Left ventricle myocardium superior (tissue), 1 donor: ENCODE measurements at regions of chr11 and their contacts with region 1.

Region 1: DNA sequence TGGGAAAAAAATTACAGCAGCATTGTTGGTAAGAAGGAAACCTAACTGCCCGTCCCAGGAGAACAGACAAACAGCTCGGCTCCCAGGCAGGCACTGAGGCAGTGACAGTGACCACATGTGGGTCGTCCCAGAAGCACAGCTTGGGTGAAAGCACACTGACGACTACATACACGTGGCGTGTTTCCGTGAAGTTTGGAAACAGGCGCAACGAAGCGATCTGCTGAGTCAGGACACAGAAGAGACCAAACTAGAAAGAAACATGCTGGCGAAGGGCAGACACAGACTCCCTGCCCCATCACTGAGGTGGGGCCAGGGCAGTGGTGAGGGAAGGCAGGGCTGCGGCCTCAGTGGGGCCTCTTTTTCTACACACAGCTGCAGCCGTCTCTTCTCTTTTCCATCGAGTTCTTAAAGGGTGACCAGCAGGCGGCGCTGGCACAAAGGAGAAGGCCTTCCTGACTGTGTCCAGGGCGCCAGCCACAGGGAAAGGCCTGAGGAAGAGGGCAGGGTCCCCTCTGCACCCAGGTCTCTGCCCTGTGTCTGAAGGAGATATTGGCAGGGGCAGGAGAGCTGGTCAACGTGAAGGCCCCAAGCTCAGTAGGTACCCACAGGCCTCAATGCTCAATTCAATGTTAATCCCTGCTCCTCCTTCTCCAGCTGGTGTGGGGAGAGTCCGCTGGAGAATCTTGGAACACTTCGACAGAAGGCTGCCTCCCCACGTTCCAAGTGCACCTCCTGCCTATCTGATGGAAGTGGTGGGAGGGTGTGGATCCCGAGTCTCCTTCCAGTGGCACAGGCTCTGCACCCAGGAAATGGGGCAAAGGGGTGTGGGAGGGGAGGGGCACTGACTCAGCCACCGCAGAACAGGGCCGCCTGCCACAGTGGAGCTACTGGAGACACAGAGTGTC is 19.9 kb downstream of the CARS1 start:
- DNase-seq: peak; percentile 91
- ATAC-seq: peak; percentile 70

Region 2: GRCh38 chr11:3091791-3092602 is 54.7 kb after region 1 on chr11:
- intact Hi-C with region 1: loop called (anchors 2 kb)
- DNase-seq: peak; percentile 83
- ATAC-seq: peak; percentile 74

Region 3: GRCh38 chr11:3217676-3218482 is 180.6 kb after region 1 on chr11:
- intact Hi-C with region 1: loop called (anchors 5 kb)
- DNase-seq: peak; percentile 28
- ATAC-seq: no peak